ENCODE measurements at regions of chr9 and their contacts with region 1.

Region 1: GRCh38 chr9:111896353-111896958 is at the start of gene UGCG:
- DNase-seq: peak; percentile 68 to 94 (median 84)
- ATAC-seq: peak; percentile 86
- H3K4me3 ChIP-seq: peak within 1 kb of the TSS; percentile 88
- H3K4me3 Mint-ChIP-seq: peak within 1 kb of the TSS; percentile 98
- H3K27ac ChIP-seq: peak within 1 kb of the TSS; percentile 64 to 67
- H3K27ac Mint-ChIP-seq: no peak within 1 kb of the TSS
- H3K4me1 ChIP-seq: peaks cover 25% of the 10 kb centered on the region
- H3K4me1 Mint-ChIP-seq: peaks cover 31% of the 10 kb centered on the region
- H3K27me3 ChIP-seq: no peaks in the 10 kb centered on the region
- H3K27me3 Mint-ChIP-seq: no peaks in the 10 kb centered on the region
- CTCF ChIP-seq: no peak
- total RNA-seq, gene UGCG: 42.1 to 44.0 TPM

Region 2: DNA sequence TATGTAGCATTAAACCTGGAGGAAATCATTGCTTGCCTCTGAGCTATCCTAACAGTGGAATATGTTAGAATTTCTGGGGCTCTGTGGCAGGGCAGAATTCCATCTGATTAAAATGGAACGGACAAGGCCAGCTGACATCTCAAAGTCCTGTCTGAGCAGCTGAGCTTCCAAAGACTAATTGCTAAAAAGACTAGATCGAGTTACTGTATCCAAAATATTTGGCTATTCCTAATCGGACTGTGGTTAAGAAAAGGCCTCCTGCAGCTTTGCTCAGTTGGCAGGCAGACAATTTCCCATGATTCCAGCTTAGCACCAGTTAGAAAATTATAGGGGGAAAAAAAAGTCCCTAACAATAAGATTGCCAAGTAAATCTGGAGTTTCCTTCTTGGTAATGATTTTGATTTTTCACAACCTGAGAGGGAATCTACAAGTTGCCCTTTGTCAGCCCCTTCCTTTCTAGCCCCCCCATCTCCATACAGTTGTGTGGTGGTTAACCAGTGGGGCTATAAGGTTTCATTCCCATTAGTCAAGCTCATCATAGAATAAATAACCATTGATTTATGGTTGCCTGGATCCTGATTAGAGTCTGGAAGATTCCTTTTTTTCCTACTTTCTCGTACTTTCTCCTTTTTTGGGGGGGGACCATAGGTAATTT is 323.4 kb before region 1 on chr9:
- CTCF ChIA-PET with region 1: no interaction called
- POLR2A ChIA-PET with region 1: no interaction called
- intact Hi-C with region 1: no loop called
- DNase-seq: no peak
- ATAC-seq: no peak
- H3K4me3 ChIP-seq: no peak overlapping the region
- H3K4me3 Mint-ChIP-seq: no peak overlapping the region
- H3K27ac ChIP-seq: no peak overlapping the region
- H3K27ac Mint-ChIP-seq: no peak overlapping the region
- H3K4me1 ChIP-seq: no peaks in the 10 kb centered on the region
- H3K4me1 Mint-ChIP-seq: no peaks in the 10 kb centered on the region
- H3K27me3 ChIP-seq: no peaks in the 10 kb centered on the region
- H3K27me3 Mint-ChIP-seq: no peaks in the 10 kb centered on the region
- CTCF ChIP-seq: no peak

Region 3: GRCh38 chr9:111759762-111760639 is 136.5 kb before region 1 on chr9:
- CTCF ChIA-PET with region 1: no interaction called
- POLR2A ChIA-PET with region 1: interaction called, 4 read pairs
- intact Hi-C with region 1: loop called (anchors 5 to 10 kb)
- DNase-seq: peak in 12 of 14 experiments; percentile 6 to 81 (median 32)
- ATAC-seq: peak; percentile 85
- H3K4me3 ChIP-seq: no peak overlapping the region
- H3K4me3 Mint-ChIP-seq: no peak overlapping the region
- H3K27ac ChIP-seq: no peak overlapping the region
- H3K27ac Mint-ChIP-seq: no peak overlapping the region
- H3K4me1 ChIP-seq: no peaks in the 10 kb centered on the region
- H3K4me1 Mint-ChIP-seq: peaks cover 5% of the 10 kb centered on the region
- H3K27me3 ChIP-seq: no peaks in the 10 kb centered on the region
- H3K27me3 Mint-ChIP-seq: no peaks in the 10 kb centered on the region
- CTCF ChIP-seq: peak; percentile 88

Region 4: DNA sequence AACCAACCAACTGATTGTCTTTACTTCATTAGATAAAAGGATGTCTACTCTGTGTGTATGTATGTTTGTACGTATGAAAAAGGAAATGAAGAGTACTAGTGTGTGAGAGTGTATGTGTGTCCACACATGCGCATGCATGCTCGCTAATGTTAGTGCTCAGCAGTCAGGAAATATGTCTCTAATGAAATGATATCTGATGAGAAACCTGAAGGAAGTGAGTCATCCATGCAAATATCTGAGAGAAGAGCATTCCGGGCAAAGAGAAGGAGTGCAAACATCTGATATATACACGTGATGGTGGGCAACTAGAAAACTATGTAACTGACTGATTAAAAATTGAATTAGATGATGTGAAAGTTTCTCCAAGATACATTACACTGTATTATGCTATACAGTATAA is 29.5 kb before region 1 on chr9:
- CTCF ChIA-PET with region 1: no interaction called
- POLR2A ChIA-PET with region 1: no interaction called
- intact Hi-C with region 1: no loop called
- DNase-seq: peak in 6 of 14 experiments; percentile 1 to 70 (median 22)
- ATAC-seq: peak; percentile 78
- H3K4me3 ChIP-seq: no peak overlapping the region
- H3K4me3 Mint-ChIP-seq: peak overlapping the region; percentile 5
- H3K27ac ChIP-seq: no peak overlapping the region
- H3K27ac Mint-ChIP-seq: no peak overlapping the region
- H3K4me1 ChIP-seq: peaks cover 4% of the 10 kb centered on the region
- H3K4me1 Mint-ChIP-seq: peaks cover 5% of the 10 kb centered on the region
- H3K27me3 ChIP-seq: no peaks in the 10 kb centered on the region
- H3K27me3 Mint-ChIP-seq: no peaks in the 10 kb centered on the region
- CTCF ChIP-seq: no peak

Region 5: DNA sequence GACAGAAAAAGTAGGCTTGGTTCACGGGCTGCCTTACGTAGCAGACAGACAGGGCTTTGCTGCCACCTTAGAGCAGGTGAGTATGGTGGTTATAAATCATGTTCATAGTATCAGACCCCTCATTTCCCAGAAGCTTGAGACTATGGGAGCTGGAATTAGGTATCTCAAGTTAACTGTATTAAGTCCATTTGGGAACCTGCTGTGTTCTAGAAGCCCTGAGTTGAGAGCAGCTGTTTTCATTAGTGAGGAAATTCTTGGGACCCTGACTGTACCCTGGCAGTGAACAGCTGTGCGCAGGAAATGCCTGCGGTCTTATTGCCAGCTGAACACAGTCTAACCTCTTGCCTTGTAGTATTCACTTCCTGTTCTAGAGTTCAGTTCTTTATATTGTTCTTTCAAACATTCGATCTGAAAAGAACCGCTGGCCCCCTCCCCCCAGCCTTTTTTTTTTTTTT is 30.0 kb after region 1 on chr9:
- CTCF ChIA-PET with region 1: interaction called, 6 read pairs
- POLR2A ChIA-PET with region 1: interaction called, 37 read pairs
- intact Hi-C with region 1: loop called (anchors 1 to 2 kb)
- DNase-seq: peak; percentile 29 to 89 (median 52)
- ATAC-seq: peak; percentile 95
- H3K4me3 ChIP-seq: no peak overlapping the region
- H3K4me3 Mint-ChIP-seq: peak overlapping the region; percentile 82
- H3K27ac ChIP-seq: peak overlapping the region in 1 of 2 donors; percentile 46
- H3K27ac Mint-ChIP-seq: peak overlapping the region; percentile 87
- H3K4me1 ChIP-seq: peaks cover 27% of the 10 kb centered on the region
- H3K4me1 Mint-ChIP-seq: peaks cover 57% of the 10 kb centered on the region
- H3K27me3 ChIP-seq: no peaks in the 10 kb centered on the region
- H3K27me3 Mint-ChIP-seq: no peaks in the 10 kb centered on the region
- CTCF ChIP-seq: no peak

Region 6: DNA sequence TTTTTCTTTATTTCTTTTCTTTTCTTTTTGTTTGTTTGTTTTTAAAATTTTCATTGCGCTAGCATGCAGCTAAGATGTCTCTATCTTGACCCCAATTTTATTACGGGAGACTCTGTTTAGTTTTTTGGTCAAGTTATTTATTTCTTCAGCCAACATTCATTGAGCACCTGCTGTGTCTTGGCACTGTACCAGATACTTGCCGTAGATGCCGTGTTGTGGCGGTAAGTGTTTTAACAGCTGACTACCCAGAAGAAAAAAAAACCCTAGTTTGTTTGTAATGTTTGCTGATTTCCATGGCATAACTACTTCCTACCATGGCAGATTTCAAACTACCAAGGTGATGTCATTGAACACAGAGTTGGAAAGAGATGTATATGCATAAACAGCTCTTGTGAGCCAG is 65.1 kb after region 1 on chr9:
- CTCF ChIA-PET with region 1: no interaction called
- POLR2A ChIA-PET with region 1: no interaction called
- intact Hi-C with region 1: no loop called
- DNase-seq: no peak
- ATAC-seq: no peak
- H3K4me3 ChIP-seq: no peak overlapping the region
- H3K4me3 Mint-ChIP-seq: no peak overlapping the region
- H3K27ac ChIP-seq: no peak overlapping the region
- H3K27ac Mint-ChIP-seq: no peak overlapping the region
- H3K4me1 ChIP-seq: peaks cover 13% of the 10 kb centered on the region
- H3K4me1 Mint-ChIP-seq: peaks cover 12% of the 10 kb centered on the region
- H3K27me3 ChIP-seq: no peaks in the 10 kb centered on the region
- H3K27me3 Mint-ChIP-seq: no peaks in the 10 kb centered on the region
- CTCF ChIP-seq: no peak

Region 7: GRCh38 chr9:111975709-111976108 is 79.3 kb after region 1 on chr9:
- CTCF ChIA-PET with region 1: no interaction called
- POLR2A ChIA-PET with region 1: no interaction called
- intact Hi-C with region 1: no loop called
- DNase-seq: peak in 6 of 14 experiments; percentile 12 to 51 (median 37)
- ATAC-seq: no peak
- H3K4me3 ChIP-seq: no peak overlapping the region
- H3K4me3 Mint-ChIP-seq: no peak overlapping the region
- H3K27ac ChIP-seq: no peak overlapping the region
- H3K27ac Mint-ChIP-seq: no peak overlapping the region
- H3K4me1 ChIP-seq: peaks cover 5% of the 10 kb centered on the region
- H3K4me1 Mint-ChIP-seq: peaks cover 12% of the 10 kb centered on the region
- H3K27me3 ChIP-seq: no peaks in the 10 kb centered on the region
- H3K27me3 Mint-ChIP-seq: no peaks in the 10 kb centered on the region
- CTCF ChIP-seq: no peak

Region 8: GRCh38 chr9:112029921-112030444 is 133.5 kb after region 1 on chr9:
- CTCF ChIA-PET with region 1: no interaction called
- POLR2A ChIA-PET with region 1: interaction called, 12 read pairs
- intact Hi-C with region 1: no loop called
- DNase-seq: peak in 3 of 14 experiments; percentile 8 to 37 (median 26)
- ATAC-seq: no peak
- H3K4me3 ChIP-seq: no peak overlapping the region
- H3K4me3 Mint-ChIP-seq: no peak overlapping the region
- H3K27ac ChIP-seq: no peak overlapping the region
- H3K27ac Mint-ChIP-seq: no peak overlapping the region
- H3K4me1 ChIP-seq: peaks cover 32% of the 10 kb centered on the region
- H3K4me1 Mint-ChIP-seq: peaks cover 62% of the 10 kb centered on the region
- H3K27me3 ChIP-seq: no peaks in the 10 kb centered on the region
- H3K27me3 Mint-ChIP-seq: peaks cover 3% of the 10 kb centered on the region
- CTCF ChIP-seq: no peak

Region 9: DNA sequence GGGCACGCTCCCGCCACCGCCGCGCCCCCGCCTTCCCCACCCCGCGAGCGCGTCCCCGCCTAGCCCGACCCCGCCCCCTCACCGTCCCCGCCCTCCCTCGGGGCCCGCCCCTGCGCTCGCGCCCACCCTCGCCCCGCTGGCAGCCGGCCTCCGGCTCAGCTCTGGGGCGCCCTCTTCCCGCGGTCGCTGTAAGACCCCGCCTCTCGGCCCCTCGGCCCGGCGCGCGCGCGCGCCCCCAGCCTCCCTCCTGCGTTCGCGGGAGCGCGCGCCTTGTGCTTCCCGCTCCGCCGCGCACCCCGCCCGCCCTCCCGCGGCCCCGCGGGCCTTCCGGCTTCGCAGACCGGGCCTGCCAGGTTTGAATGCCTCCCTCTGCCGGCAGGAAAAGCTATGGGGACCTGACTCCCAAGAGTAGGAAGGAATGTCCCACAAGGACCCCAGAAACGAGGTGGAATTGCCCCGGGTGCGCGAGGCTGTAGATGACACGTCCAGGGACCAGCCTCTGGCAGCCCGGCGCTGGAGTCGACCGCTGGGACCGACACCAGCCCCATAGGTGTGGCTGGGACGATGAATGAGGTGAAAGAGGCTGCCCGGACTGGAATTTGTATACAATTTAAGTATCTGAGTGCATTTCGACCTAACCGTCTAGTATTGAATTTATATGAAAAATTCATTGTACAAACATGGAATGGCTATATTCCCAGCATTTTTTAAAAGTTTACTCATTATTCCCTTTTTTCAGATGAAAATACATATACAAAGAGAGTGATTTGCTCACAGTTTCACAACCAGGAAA is 437.4 kb after region 1 on chr9:
- CTCF ChIA-PET with region 1: no interaction called
- POLR2A ChIA-PET with region 1: interaction called, 19 read pairs
- intact Hi-C with region 1: loop called (anchors 2 to 5 kb)
- DNase-seq: peak; percentile 85 to 98 (median 94)
- ATAC-seq: peak; percentile 80
- H3K4me3 ChIP-seq: peak overlapping the region; percentile 88
- H3K4me3 Mint-ChIP-seq: peak overlapping the region; percentile 90
- H3K27ac ChIP-seq: peak overlapping the region; percentile 91 to 92
- H3K27ac Mint-ChIP-seq: peak overlapping the region; percentile 88
- H3K4me1 ChIP-seq: peaks cover 7% of the 10 kb centered on the region
- H3K4me1 Mint-ChIP-seq: peaks cover 35% of the 10 kb centered on the region
- H3K27me3 ChIP-seq: no peaks in the 10 kb centered on the region
- H3K27me3 Mint-ChIP-seq: no peaks in the 10 kb centered on the region
- CTCF ChIP-seq: peak; percentile 49